OCI-LY7 (cell line): ENCODE measurements at regions of chr6 and their contacts with region 1.

Region 1: GRCh38 chr6:85642774-85643536 is at the start of gene SYNCRIP:
- DNase-seq: peak; percentile 98
- H3K4me3 ChIP-seq: peak within 1 kb of the TSS; percentile 93
- H3K27ac ChIP-seq: peak within 1 kb of the TSS; percentile 90
- H3K4me1 ChIP-seq: peaks cover 42% of the 10 kb centered on the region
- CTCF ChIP-seq: no peak
- total RNA-seq, gene SYNCRIP: 73.5 and 80.9 TPM in 2 replicates

Region 2: DNA sequence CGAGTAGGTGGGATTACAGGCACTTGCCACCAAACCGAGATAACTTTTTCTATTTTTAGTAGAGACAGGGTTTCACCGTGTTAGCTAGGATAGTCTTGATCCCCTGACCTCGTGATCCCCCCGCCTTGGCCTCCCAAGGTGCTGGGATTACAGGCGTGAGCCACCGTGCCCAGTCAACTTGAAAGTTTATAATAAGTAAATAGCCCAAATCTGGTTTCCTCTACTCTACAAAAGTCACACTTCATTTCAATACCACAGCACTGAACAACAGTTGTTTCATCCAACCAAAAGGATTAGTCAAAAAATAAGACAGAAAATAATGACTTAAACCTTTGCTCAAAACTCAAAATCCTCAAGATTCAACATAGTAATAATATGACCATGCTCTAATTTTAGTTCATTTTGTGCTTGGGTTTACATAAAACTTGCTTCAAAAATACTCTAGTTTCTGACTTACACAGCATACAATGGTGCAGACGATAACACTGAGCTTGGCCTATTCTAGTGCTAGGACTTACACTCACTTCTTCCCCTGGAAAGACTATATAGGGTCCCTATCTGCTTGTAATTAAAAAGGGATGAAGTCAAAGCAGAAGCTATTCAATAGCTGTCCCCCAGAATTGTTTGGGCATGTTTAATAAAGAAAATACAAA is 136.4 kb before region 1 on chr6:
- CTCF ChIA-PET with region 1: no interaction called
- POLR2A ChIA-PET with region 1: no interaction called
- intact Hi-C with region 1: no loop called
- DNase-seq: no peak
- H3K4me3 ChIP-seq: no peak overlapping the region
- H3K27ac ChIP-seq: no peak overlapping the region
- H3K4me1 ChIP-seq: no peaks in the 10 kb centered on the region
- CTCF ChIP-seq: no peak

Region 3: GRCh38 chr6:85593438-85594196 is 49.3 kb before region 1 on chr6 and contains the start of gene SNX14:
- CTCF ChIA-PET with region 1: interaction called, 7 read pairs
- POLR2A ChIA-PET with region 1: interaction called, 36 read pairs
- intact Hi-C with region 1: loop called (anchors 1 kb)
- DNase-seq: peak; percentile 93
- H3K4me3 ChIP-seq: peak within 1 kb of the TSS; percentile 85
- H3K27ac ChIP-seq: peak within 1 kb of the TSS; percentile 83
- H3K4me1 ChIP-seq: peaks cover 26% of the 10 kb centered on the region
- CTCF ChIP-seq: no peak
- total RNA-seq, gene SNX14: 73.4 and 86.0 TPM in 2 replicates

Region 4: GRCh38 chr6:85612690-85613474 is 30.1 kb before region 1 on chr6:
- CTCF ChIA-PET with region 1: interaction called, 4 read pairs
- POLR2A ChIA-PET with region 1: interaction called, 12 read pairs
- intact Hi-C with region 1: no loop called
- DNase-seq: no peak
- H3K4me3 ChIP-seq: no peak overlapping the region
- H3K27ac ChIP-seq: no peak overlapping the region
- H3K4me1 ChIP-seq: no peaks in the 10 kb centered on the region
- CTCF ChIP-seq: no peak

Region 5: DNA sequence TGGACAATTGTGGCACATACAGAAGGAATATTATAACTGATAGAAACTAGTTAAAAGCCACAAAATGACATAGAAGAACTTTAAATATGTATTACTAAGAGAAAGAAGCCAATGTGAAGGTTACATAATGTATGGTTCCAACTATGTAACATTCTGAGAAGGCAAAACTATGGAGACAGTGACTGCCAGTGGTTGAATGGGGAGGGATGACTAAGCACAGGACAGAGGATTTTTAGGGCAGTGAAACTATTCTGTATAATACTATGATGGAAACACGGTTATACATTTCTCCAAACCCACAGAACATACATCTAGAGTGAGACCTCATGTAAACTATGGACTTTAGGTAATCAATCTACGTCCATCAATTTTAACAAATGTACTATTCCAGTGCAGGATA is 22.6 kb before region 1 on chr6:
- CTCF ChIA-PET with region 1: no interaction called
- POLR2A ChIA-PET with region 1: interaction called, 6 read pairs
- intact Hi-C with region 1: loop called (anchors 2 kb)
- DNase-seq: no peak
- H3K4me3 ChIP-seq: no peak overlapping the region
- H3K27ac ChIP-seq: no peak overlapping the region
- H3K4me1 ChIP-seq: no peaks in the 10 kb centered on the region
- CTCF ChIP-seq: no peak

Region 6: DNA sequence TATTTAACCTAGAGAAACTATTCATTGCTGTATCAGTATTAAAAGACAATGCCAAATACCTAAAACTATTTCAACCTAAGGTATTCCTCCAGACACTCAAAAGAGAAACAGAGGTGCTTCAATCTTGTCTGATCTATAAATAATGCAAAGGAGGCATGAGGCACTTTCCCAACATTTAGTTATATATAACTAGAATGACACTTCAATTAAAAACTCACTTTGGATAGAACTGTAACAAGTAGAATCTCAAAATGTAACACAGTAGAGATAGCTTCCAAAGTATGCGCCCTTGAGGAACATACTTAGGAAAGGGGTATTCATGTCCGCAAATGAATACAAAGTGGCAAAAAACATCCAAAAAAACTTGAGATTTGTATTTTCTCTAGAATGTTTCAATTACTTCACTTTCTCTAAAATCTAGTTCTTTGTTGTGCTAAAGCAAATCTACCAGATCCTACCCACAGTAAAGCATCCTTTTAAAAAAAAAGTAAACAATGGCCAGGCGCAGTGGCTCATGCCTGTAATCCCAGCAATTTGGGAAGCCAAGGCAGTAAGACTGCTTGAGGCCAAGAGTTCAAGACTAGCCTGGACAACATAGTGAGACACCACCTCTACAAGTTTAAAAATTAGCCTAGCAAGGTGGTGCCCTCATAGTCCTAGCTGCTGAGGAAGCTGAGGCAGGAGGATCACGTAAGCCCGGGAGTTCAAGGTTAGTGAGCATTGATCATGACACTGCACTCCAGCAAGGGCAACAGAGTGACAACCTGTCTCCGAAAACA is 10.6 kb before region 1 on chr6:
- CTCF ChIA-PET with region 1: no interaction called
- POLR2A ChIA-PET with region 1: interaction called, 21 read pairs
- intact Hi-C with region 1: no loop called
- DNase-seq: no peak
- H3K4me3 ChIP-seq: no peak overlapping the region
- H3K27ac ChIP-seq: no peak overlapping the region
- H3K4me1 ChIP-seq: peaks cover 15% of the 10 kb centered on the region
- CTCF ChIP-seq: no peak

Region 7: GRCh38 chr6:85669735-85670194 is 26.8 kb after region 1 on chr6:
- CTCF ChIA-PET with region 1: interaction called, 3 read pairs
- POLR2A ChIA-PET with region 1: interaction called, 362 read pairs
- intact Hi-C with region 1: no loop called
- DNase-seq: peak; percentile 57
- H3K4me3 ChIP-seq: peak overlapping the region; percentile 9
- H3K27ac ChIP-seq: peak overlapping the region; percentile 55
- H3K4me1 ChIP-seq: peaks cover 31% of the 10 kb centered on the region
- CTCF ChIP-seq: no peak

Region 8: DNA sequence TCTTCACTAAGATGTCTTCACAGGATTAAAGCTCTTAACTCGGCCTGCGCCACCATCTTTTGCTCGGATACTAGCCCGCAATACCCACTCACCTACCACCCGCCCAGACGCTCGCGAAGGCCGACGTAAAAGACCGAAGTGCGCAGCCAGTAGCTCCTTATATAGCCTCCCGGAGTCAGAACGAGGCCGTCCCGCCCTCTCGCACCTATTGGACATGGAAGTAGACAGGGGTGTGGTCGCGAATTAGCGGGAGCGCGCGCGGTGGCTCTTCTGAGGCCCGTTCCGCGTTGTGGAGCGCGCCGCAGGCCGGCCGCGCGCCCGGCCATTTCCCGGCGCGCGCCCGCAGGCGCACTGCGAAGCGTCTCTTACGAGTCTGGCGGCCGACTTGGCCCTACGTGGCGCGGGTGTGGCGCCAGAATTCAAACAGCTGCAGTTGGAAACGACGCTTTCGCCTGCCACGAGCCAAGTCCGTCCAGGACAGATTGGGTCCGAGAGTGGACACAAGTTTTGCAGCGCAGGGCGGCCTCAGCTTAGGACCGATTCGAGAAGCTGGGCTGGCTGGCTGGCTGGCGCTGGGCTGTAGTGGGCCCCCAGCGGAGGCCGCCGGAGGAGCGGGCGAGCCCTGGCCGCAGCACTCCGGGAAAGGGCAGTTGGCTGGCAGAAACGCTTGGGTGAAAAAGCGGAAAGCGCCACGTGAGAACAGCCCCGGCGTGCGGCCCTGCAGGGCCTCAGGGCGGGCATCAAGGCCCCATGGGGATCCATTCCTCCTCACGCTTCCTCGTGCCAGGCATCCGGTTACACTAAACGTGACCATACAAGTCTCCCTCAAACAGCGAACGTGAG is 35.9 kb after region 1 on chr6:
- CTCF ChIA-PET with region 1: no interaction called
- POLR2A ChIA-PET with region 1: interaction called, 362 read pairs
- intact Hi-C with region 1: loop called (anchors 1 kb)
- DNase-seq: peak; percentile 99
- H3K4me3 ChIP-seq: peak overlapping the region; percentile 97
- H3K27ac ChIP-seq: peak overlapping the region; percentile 96
- H3K4me1 ChIP-seq: peaks cover 27% of the 10 kb centered on the region
- CTCF ChIP-seq: 0 out of 2 replicates have a peak, but pooled peaks have one; percentile 27